ENCODE measurements at regions of chr16 and their contacts with region 1.

Region 1: DNA sequence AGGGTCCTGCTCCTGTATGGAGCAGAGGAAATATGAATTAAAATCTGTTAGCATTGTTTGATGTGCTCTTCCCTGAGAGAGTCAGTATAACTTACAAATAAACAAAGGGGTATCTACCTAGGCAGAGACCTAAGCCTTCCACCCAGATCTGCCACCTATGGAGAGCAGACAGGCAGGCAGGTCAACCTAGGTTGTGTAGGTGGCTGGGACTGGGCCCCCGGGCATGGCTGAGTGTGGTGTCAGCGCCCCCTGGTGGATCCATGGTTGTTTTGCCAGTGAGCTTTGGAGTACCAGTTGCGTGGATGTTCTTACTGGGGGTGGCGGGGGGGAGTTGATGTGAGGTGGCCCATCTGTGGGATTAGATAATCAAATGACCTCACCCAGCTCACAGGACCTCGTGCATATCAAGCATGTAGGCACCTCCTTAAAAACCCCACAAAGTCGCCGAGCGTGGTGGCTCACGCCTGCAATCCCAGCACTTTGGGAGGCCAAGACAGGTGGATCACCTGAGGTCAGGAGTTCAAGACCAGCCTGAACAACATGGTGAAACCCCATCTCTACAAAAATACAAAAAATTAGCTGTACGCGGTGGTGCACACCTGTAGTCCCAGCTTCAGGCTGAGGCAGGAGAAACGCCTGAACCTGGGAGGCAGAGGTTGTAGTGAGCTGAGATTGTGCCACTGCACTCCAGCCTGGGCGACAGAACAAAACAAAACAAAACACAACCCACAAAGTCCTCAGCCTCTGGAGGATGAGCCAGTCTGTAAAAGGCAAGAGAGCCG is 17.6 kb downstream of the DUS2 start:
- DNase-seq: peak; percentile 87
- CTCF ChIP-seq: peak; percentile 88

Region 2: GRCh38 chr16:67942200-67942509 is 98.5 kb before region 1 on chr16:
- CTCF ChIA-PET with region 1: interaction called, 17 read pairs
- POLR2A ChIA-PET with region 1: interaction called, 7 read pairs
- DNase-seq: peak; percentile 75
- CTCF ChIP-seq: peak; percentile 68

Region 3: DNA sequence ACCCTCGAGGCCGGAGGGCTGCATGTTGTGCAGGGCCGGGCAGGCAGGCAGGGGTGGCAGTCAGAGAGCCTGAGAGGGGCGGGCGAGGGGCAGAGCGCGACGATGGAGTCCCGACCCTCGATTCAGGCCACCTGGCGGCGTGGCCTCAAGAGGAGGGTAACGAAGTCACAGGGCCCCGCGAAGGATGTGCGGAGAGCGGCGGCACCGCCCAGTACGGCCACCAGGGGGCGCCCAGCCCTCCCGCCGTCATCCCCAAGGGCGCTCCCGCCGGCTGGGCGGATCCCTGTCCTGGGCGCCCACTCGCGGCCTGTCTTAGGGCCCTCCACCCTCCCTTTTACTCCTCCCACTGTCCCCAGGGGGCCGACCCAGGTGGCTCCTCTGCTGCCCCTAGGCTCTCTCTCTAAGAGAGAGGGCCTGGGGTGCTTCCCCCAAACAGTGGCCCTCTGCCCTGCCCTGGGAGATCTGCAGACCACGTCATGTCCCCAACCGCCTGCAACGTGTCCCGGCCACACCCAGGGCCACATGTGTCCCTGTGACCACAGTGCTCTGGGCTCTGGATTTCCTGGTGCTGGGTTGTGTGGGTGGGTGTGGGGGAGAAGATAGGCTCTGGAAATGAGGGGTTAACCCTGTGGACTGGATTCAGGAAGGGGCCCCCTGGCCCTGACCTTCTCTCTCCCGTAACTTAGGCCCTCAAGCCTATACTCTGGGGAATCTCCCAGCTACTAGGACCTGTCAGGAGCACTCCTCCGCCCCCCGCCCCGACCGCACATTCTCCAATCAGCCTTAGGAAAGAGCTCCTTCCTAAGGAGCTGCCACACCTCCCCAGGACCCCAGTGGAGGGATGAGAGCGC is 47.3 kb before region 1 on chr16:
- CTCF ChIA-PET with region 1: interaction called, 18 read pairs
- POLR2A ChIA-PET with region 1: no interaction called
- DNase-seq: peak; percentile 89
- CTCF ChIP-seq: peak; percentile 93

Region 4: DNA sequence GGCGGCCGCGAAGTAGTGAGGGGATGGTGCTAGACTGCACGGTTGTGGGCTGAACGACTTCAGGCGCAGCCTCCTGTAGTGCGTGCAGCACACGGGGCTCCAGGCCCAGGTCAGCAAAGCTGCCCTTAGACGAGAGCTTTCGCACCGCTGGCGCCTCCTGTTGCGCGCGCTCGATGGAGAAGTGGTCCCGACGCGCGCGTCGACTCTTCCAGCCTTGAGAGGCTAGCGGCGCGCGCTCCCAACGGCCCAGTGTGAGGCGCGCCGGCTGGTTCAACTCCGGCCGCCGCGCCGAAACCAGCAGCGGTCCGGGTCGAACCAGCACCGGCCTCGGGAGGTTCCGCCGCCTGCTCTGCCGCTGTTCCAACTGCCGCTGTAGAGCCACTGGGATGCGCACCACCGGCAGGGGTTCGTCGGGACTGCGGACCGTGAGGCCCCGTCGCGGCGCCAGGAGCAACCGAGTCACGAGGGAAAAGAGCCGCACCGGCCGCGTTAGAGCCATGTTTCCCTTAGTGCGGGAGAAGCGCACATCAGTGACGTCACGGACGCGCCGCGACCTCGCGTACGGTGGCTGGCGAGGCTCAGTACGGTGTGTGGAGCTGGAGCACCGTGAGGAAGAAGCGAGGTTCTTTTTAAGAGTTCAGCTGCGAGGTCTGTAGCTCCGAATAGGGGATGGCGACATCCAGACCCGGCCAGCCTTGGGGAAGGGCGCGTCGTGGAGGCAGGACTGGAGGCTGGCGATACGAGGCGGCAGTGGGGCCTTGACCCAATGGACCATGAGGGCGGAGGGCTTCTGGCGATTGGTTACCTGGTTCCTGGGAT is 17.8 kb before region 1 on chr16 and contains the starts of genes DDX28 and DUS2:
- CTCF ChIA-PET with region 1: interaction called, 49 read pairs
- POLR2A ChIA-PET with region 1: no interaction called
- DNase-seq: peak; percentile 92
- CTCF ChIP-seq: peak; percentile 17

Region 5: DNA sequence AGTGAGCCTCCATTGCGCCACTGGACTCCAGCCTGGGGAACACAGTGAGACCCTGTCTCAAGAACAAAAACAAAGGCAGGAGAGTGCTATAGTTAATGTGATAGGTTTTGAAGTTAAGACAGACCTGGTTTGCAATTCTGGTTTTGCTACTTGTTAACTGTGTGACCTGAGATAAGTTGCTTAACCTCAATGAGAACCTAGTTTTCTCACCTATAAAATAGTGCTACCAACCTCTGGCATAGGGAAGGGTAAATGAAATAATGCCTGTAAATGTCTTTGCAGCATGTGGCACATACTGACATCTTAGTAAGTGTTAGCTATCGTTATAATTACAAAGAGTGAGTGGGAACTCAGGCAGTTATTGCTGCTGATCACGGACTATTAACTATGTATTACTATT is 14.7 kb after region 1 on chr16:
- CTCF ChIA-PET with region 1: interaction called, 44 read pairs
- POLR2A ChIA-PET with region 1: no interaction called
- DNase-seq: no peak
- CTCF ChIP-seq: no peak

Region 6: DNA sequence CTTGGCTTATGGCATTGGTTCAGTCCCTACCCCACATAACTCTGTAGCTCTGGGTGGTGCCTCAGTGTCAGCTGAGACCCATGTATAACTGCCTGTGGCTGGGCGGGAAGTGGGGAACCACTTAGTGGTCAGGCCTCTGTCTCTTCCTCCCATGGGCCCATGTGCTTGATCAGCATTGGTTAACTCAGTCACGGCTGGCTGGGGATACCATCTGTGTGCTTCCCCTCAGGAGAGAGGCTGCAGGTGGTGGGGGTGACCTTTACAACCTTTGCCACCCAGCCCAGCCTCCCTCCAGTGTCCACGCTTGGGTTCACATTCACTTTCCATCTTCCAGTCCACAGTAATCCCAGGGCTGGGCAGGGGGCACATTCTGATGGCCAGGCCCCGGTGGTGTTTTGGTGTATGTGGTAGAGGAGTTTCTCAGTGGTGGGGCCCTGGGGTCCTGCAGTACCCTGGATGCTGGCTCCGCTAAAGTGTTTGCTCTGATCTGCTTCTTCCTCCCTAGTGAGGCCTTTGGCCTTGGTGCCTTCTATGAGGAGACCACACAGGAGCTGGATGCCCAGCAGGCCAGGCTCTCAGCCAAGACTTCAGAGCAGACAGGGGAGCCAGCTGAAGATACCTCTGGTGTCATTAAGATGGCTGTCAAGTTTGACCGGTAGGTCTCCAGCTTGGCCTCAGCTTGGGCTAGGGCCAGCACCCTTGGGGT is 34.3 kb after region 1 on chr16:
- CTCF ChIA-PET with region 1: interaction called, 22 read pairs
- POLR2A ChIA-PET with region 1: no interaction called
- DNase-seq: peak; percentile 78
- CTCF ChIP-seq: no peak

Region 7: GRCh38 chr16:68310761-68311511 is 270.2 kb after region 1 on chr16 and contains the starts of genes PRMT7 and SLC7A6OS:
- CTCF ChIA-PET with region 1: no interaction called
- POLR2A ChIA-PET with region 1: no interaction called
- DNase-seq: peak; percentile 98
- CTCF ChIP-seq: no peak